AG04449 (cell line): ENCODE measurements at regions of chr3 and their contacts with region 1.

Region 1: DNA sequence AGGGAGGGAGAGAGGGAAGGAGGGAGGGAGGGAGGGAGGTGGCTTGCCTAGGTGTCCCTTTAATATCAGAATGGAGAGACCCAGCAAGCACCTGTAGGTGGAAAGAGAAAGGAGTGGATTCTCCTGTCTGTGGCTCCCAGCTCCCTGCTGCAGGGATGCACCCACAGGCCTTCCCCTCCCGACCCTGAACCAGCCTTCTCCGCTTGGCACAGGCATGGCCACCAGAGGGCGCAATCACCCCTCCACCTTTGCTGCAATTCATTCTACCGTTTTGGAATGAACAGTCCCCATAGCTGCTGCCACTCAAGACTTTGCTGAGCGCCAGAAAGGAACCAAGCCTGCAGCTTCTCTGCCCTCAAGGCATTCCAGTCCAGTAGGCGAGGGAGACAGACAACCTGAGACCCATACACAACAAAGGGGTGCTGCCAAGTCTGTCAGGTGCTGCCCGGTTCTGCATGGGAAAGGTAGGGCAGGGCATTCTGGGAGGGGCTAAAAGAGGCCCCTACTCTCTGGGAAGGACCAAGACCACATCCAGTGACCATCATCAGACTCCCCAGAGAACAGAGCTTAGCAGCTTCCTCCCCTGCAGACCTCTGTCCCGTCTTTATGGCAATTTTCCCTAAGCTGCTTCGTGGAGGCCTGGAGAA is 4.9 kb downstream of the TLR9 start:
- DNase-seq: no peak
- H3K4me3 ChIP-seq: no peak overlapping the region
- CTCF ChIP-seq: peak; percentile 98

Region 2: DNA sequence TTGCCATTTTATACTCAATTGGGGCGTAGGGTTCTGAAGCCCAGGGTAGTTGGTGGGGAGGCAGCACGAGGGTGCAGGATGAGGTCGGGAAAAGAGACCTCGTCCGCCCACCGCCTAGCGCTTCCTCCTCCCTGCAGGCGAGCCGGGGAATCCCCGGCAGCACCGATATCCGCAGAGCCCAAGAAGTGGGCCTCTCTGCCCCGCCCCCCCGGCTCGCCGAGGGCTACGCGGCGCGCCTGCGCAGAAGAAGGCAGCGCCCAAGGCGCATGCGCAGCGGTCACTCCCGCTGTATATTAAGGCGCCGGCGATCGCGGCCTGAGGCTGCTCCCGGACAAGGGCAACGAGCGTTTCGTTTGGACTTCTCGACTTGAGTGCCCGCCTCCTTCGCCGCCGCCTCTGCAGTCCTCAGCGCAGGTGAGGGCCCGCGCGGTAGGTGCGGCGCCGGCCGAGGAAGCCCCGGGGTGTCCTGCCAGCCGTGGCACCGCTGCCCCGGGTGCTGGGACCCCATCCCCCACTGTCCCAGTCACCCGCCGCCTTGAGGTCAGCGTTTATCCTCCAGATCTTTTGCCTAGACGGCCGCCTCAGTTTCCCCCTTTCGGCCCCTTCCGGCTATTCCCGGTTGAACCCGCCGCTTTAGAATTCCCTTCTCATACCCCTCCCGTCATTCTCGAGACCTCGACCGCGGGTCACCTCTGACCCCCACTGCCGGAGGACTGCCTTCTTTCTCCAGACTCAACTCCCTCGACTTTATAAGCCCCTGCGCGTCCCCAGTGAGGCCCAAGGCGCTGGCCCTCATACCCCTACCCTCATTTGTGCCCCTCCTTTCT is 22.4 kb before region 1 on chr3 and contains the start of gene ALAS1:
- CTCF ChIA-PET with region 1: interaction called, 219 read pairs
- POLR2A ChIA-PET with region 1: no interaction called
- DNase-seq: peak; percentile 16
- H3K4me3 ChIP-seq: peak within 1 kb of the TSS; percentile 84
- CTCF ChIP-seq: peak; percentile 16

Region 3: DNA sequence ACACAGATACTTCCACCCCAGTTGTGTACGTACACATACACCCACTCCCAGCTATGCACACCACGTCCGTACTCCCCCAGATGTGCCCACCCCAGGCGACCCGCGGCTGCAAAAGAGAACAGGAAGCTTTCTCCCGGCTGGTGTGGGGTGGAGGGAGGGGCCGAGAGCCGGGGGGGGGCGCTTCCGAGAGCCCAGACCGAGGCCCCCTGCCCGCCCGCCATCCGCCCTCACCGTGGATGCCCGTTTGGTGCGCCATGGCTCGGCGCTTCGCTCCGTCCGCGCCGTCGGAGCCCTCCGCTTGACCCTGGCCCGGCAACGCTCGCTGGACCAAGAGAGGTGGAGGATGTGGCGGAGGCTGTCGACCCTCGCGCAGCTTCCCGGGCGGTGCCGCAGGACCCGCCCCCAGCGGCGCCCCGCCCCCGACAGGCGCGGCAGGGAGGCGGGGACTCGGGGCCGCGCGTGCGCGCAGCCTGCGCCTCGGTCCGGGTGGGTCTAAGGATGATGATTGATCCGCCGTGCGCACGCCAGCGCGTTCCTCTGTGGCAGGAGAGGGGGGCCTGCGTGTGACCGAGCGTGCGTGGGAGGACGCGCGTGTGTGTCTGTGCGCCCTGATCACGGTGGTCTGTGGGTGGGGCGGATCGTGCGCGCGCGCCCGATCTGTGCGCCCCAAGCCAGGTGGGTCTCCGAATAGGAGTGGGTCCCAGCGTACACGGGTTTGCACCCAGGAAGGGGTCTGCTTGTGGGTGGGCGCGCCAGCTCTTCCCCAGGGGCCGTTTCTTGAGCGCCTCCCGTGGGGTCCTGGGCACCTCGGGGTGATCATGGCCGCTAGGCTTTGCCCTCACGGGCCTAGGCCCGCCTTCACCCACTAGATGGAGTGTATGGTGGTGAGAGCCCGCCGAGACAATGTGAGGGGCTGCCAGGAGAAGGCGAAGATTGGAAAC is 18.5 kb after region 1 on chr3 and contains the start of gene TWF2:
- CTCF ChIA-PET with region 1: interaction called, 336 read pairs
- POLR2A ChIA-PET with region 1: interaction called, 6 read pairs
- DNase-seq: no peak
- H3K4me3 ChIP-seq: peak within 1 kb of the TSS; percentile 95
- CTCF ChIP-seq: peak; percentile 43

Region 4: GRCh38 chr3:52278510-52279069 is 58.1 kb after region 1 on chr3 and contains the start of gene WDR82:
- CTCF ChIA-PET with region 1: interaction called, 39 read pairs
- POLR2A ChIA-PET with region 1: no interaction called
- DNase-seq: peak; percentile 38
- H3K4me3 ChIP-seq: peak within 1 kb of the TSS; percentile 98
- CTCF ChIP-seq: peak; percentile 73

Region 5: GRCh38 chr3:52385157-52385556 is 164.7 kb after region 1 on chr3:
- CTCF ChIA-PET with region 1: interaction called, 27 read pairs
- POLR2A ChIA-PET with region 1: no interaction called
- DNase-seq: no peak
- H3K4me3 ChIP-seq: no peak overlapping the region
- CTCF ChIP-seq: peak; percentile 70